MCF 10A (cell line): ENCODE measurements at regions of chr5 and their contacts with region 1.

Region 1: GRCh38 chr5:78638423-78638822 is 10.1 kb downstream of the LHFPL2 start:
- DNase-seq: peak; percentile 98
- H3K4me3 Mint-ChIP-seq: peak overlapping the region; percentile 38
- H3K27ac Mint-ChIP-seq: peak overlapping the region; percentile 89
- H3K4me1 Mint-ChIP-seq: peaks cover 43% of the 10 kb centered on the region
- H3K27me3 Mint-ChIP-seq: no peaks in the 10 kb centered on the region
- CTCF ChIP-seq: no peak

Region 2: DNA sequence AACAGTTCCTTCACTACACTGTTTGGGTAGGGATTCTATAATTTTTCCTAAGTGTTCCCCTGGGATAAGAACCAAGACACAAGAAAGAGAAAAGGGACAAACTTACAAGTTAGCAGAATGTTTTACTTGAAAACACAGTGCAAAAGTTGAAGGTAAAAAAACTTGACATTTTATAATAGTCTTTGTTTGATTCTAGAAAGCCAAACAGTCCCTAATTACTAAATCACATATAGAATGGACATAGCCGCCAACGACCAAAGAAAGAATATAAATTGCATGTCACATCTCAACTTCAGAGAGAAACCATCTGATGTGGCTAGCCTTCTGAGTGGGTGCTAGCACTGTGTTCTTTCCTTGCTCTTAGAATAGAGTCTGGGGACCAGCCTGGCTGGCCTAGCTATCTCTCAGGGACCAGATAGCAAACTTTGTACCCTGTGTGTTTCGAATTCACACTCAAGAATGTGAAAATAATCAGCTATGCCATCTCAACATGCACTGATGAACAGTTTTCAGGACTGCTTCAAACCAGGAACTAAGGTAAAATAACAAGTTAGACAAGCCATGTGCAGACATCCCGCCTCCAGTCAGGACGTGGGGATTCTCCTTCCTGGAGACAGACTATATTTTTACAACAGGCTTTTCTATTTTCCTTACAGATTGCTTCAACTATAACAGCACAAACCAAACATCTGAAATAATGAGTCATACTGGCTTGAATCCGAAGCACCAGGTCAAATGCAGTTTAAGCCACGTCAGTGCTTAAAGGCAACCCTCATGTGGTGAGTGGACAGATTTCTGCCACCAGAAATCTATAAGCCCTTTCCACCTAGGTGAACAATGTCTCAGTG is 43.6 kb before region 1 on chr5:
- CTCF ChIA-PET with region 1: interaction called, 3 read pairs
- POLR2A ChIA-PET with region 1: no interaction called
- intact Hi-C with region 1: loop called (anchors 5 kb)
- DNase-seq: peak; percentile 92
- H3K4me3 Mint-ChIP-seq: no peak overlapping the region
- H3K27ac Mint-ChIP-seq: peak overlapping the region; percentile 73
- H3K4me1 Mint-ChIP-seq: peaks cover 51% of the 10 kb centered on the region
- H3K27me3 Mint-ChIP-seq: no peaks in the 10 kb centered on the region
- CTCF ChIP-seq: no peak

Region 3: DNA sequence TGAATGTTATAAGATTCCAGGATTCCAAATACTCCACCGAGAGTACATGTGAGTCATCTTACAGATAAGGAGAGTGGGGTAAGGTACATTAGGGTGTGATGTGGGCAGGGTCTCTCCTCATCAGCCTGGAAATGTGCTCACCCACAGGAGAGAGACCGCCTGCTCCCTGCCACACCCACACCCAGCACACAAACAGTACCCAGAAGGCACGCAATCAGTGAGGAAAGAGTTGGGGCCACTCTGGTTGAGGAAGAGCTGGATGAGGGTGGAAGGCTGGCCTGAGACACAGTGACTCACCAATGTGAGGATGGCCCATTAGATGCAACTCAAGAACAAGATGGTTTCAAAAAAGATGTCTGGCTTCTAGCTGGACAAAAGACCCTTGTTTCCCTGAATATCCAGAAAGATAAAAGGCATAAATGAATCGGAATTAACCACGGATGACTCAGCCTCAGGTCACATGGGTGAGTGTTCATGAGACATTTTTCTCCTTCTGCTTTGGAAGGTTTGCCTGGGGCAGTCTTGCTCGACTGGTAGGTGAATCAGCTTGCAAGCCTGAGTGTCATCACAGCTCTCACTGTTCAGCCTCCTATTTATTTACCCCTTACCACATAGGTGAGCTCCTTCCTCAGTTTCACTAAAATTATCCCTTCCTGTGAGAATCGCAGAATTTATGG is 61.3 kb after region 1 on chr5:
- CTCF ChIA-PET with region 1: interaction called, 4 read pairs
- POLR2A ChIA-PET with region 1: interaction called, 7 read pairs
- intact Hi-C with region 1: loop called (anchors 1 kb)
- DNase-seq: peak; percentile 99
- H3K4me3 Mint-ChIP-seq: peak overlapping the region; percentile 75
- H3K27ac Mint-ChIP-seq: peak overlapping the region; percentile 98
- H3K4me1 Mint-ChIP-seq: peaks cover 38% of the 10 kb centered on the region
- H3K27me3 Mint-ChIP-seq: no peaks in the 10 kb centered on the region
- CTCF ChIP-seq: no peak